ENCODE measurements at regions of chr6 and their contacts with region 1.

Region 1: DNA sequence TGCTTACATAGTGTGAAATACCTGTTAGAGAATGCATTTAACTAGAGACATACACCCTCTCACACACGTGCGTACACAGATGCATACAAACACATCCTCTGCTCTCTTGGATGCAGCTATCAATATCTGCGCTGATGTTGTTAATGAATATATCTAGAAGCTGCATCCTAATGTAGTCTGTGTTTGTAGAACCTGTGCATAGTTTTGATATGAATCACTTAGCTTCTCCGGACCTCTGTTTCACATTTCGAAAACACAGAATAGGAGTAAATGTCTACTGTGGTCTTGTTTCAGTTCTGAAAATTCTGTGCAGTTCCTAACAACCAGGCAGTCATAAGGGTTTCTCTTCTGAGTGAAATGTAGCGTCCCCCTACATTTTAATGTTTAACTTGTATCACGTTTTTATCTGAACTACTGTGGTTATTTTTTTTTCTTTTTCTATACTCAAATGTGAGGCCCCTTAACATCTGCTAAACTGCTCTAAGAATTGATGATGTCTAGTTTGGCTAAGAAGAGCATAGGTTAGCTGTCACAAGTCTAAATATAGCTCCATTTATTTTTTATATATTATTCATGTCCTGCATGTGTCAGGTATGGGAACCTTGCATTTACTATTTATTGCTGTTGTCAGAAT is 254.5 kb downstream of the TMEM242 start:
- DNase-seq: no peak
- H3K4me3 Mint-ChIP-seq: no peak overlapping the region
- H3K27ac Mint-ChIP-seq: peak overlapping the region; percentile 58
- H3K4me1 Mint-ChIP-seq: peaks cover 54% of the 10 kb centered on the region
- H3K27me3 Mint-ChIP-seq: no peaks in the 10 kb centered on the region

Region 2: DNA sequence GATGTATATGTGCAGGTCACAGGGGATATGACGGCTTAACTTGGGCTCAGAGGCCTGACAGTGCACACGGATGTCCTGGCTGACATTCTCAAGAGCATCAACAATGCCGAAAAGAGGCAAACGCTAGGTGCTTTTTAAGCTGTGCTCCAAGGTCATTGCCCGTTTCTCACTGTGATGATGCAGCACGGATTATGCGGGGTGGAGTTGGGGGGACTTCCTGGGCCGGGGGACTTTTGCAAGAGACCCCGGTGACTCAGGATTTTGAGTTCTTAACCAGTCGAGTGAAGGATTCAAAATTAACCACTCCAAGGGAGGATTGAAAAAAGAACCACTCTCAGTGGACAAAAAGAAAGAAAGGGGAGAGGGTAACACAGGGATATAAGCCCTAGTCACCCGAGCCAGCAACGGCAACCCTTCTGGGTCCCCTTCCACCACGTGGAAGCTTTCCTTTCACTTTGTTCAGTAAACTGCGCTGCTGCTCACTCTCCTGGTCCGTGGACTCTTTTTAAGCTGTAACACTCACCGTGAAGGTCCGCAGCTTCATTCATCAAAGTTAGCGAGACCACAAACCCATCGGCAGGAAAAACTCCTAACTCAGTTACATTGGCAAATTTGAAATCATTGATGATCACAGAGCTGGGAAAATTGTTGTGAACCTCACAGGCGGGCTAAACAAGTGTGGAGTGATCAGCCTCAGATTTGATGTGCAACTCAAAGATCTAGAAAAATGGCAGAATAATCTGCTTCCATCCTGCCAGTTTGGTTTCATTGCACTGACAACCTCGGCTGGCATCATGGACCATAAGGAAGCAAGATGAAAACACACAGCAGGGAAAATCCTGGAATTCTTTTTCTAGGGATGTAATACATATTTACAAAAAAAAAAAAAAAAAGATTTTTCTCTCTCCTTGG is 92.3 kb before region 1 on chr6:
- intact Hi-C with region 1: no loop called
- DNase-seq: no peak
- H3K4me3 Mint-ChIP-seq: peak overlapping the region; percentile 74
- H3K27ac Mint-ChIP-seq: peak overlapping the region; percentile 83
- H3K4me1 Mint-ChIP-seq: peaks cover 50% of the 10 kb centered on the region
- H3K27me3 Mint-ChIP-seq: no peaks in the 10 kb centered on the region

Region 3: GRCh38 chr6:157034436-157035230 is 34.2 kb before region 1 on chr6:
- intact Hi-C with region 1: loop called (anchors 2 kb)
- DNase-seq: no peak
- H3K4me3 Mint-ChIP-seq: peak overlapping the region; percentile 49
- H3K27ac Mint-ChIP-seq: no peak overlapping the region
- H3K4me1 Mint-ChIP-seq: peaks cover 21% of the 10 kb centered on the region
- H3K27me3 Mint-ChIP-seq: no peaks in the 10 kb centered on the region

Region 4: DNA sequence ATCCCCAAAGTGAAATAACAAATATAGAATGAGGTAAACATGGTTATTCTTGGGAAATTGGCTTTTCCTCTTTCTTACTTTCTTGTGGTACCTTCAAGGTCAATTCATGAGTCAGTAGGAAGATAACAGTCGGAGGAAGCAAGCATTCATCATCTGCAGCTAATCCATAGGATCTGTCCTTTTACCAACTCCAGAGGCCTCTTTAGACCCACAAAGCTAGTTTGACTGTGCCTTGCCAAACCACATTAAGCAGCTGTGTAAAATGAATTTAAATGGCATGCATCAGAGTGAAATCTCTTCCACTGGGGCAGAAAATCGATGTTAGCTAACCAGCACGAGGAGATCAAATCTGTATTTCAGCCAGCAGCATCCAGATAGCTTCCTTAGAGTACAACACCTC is 83.2 kb after region 1 on chr6:
- intact Hi-C with region 1: loop called (anchors 2 kb)
- DNase-seq: no peak
- H3K4me3 Mint-ChIP-seq: no peak overlapping the region
- H3K27ac Mint-ChIP-seq: peak overlapping the region; percentile 55
- H3K4me1 Mint-ChIP-seq: peaks cover 22% of the 10 kb centered on the region
- H3K27me3 Mint-ChIP-seq: no peaks in the 10 kb centered on the region

Measured in activated T-helper 2 cell treated with anti-CD3 and anti-CD28 coated beads, Interferon-gamma antibody, Interleukin-2, Interleukin-4, amounts not matched to agents 10 μg/mL and 5 μg/mL and 100 μg/mL, durations not matched to agents 14 hours and 24 hours and 36 hours (primary cell).